WTC11 (cell line): ENCODE measurements at regions of chr21 and their contacts with region 1.

Region 1: DNA sequence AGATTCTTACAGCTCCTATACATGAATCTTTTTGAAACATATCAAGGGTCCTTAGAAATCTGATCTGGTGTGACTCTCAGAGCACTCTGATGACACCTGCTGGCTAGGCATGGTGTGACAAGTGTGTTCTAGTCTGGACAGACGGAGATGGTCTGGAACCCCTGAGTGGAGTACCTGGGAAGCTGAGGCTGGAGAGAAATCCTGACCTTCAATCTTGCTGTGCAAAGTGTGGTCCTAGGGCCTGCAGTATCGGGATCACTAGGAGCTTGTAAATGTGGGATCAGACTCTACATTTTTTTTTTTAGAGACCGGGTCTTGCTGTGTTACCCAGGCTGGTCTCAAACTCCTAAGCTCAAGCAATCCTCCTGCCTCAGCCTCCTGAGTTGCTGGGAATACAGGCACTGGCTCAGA is 78.6 kb upstream of the SOD1 start:
- DNase-seq: peak; percentile 87
- ATAC-seq: peak; percentile 95
- H3K4me3 Mint-ChIP-seq: no peak overlapping the region
- H3K27ac Mint-ChIP-seq: no peak overlapping the region
- H3K4me1 Mint-ChIP-seq: 0 out of 2 replicates have a peak, but pooled peaks cover 8% of the 10 kb centered on the region
- H3K27me3 Mint-ChIP-seq: no peaks in the 10 kb centered on the region
- CTCF ChIP-seq: peak; percentile 75

Region 2: DNA sequence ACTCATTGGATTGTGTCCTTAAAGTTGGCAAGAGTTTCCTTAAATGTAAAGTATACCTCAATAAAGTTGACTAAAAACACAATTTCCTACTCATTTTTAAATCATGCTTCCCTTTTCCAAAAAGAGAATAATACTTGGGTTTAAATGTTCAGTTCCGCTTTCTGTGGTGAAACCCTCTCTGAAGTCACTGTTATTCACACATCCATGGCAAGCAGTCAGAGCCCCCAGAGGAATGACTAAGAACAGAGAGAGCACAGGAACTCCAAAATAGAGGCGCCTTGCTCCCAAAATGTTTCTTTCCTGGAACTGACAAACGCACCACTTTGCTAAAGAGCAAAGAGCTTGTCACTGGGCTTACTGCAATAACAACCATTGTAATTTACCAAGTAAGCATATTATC is 379.3 kb before region 1 on chr21:
- CTCF ChIA-PET with region 1: interaction called, 15 read pairs
- POLR2A ChIA-PET with region 1: no interaction called
- DNase-seq: no peak
- ATAC-seq: no peak
- H3K4me3 Mint-ChIP-seq: no peak overlapping the region
- H3K27ac Mint-ChIP-seq: no peak overlapping the region
- H3K4me1 Mint-ChIP-seq: peaks cover 3% of the 10 kb centered on the region
- H3K27me3 Mint-ChIP-seq: no peaks in the 10 kb centered on the region
- CTCF ChIP-seq: no peak

Region 3: GRCh38 chr21:31473685-31474345 is 107.1 kb before region 1 on chr21:
- CTCF ChIA-PET with region 1: interaction called, 12 read pairs
- POLR2A ChIA-PET with region 1: no interaction called
- DNase-seq: no peak
- ATAC-seq: no peak
- H3K4me3 Mint-ChIP-seq: no peak overlapping the region
- H3K27ac Mint-ChIP-seq: peak overlapping the region; percentile 66; the same call in 1 of the 2 replicates
- H3K4me1 Mint-ChIP-seq: peaks cover 34% of the 10 kb centered on the region
- H3K27me3 Mint-ChIP-seq: no peaks in the 10 kb centered on the region
- CTCF ChIP-seq: no peak

Region 4: DNA sequence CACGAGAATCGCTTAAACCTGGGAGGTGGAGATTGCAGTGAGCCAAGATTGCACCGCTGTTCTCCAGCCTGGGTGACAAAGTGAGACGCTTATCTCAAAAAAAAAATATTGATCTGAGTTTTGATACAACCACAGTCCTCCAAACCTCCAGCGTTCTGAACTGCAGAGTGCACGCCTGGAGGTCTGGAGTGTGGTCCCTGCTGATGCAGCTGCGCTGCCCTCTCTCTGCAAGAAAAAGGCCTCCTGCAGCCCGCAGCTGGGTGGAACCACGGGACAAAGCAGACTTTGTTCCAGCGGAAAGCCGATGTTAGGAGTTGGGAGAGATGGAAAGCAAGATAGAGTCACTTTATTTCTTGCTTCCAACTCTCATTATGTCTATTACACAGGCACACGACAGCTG is 66.3 kb before region 1 on chr21:
- CTCF ChIA-PET with region 1: interaction called, 15 read pairs
- POLR2A ChIA-PET with region 1: no interaction called
- DNase-seq: peak; percentile 50
- ATAC-seq: peak; percentile 83
- H3K4me3 Mint-ChIP-seq: peak overlapping the region; percentile 29; the same call in 1 of the 2 replicates
- H3K27ac Mint-ChIP-seq: 0 out of 2 replicates have a peak overlapping the region, but pooled peaks have one; percentile 27
- H3K4me1 Mint-ChIP-seq: peaks cover 30% of the 10 kb centered on the region
- H3K27me3 Mint-ChIP-seq: no peaks in the 10 kb centered on the region
- CTCF ChIP-seq: no peak

Region 5: DNA sequence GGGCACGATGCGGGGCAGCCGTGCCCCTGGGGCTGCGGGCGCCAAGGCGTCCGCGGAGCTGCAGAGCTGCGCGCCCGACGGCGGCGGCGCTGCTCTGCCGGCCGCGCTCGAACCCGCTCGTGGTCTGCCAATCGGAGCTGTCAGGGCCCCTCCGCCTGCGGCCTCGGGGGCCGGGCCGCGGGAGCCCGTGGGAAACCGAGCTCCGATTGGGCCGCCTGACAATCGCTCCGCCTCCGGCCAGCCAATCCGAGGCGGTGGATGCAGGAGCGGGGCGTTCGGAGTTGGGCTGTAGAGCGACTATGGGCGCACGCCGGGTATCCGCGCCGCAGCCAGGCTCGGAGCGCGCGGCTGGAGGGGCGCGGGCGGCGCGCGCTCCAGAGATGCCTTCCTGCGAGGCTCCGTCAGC is 21.9 kb before region 1 on chr21:
- CTCF ChIA-PET with region 1: interaction called, 46 read pairs
- POLR2A ChIA-PET with region 1: interaction called, 9 read pairs
- DNase-seq: peak; percentile 96
- ATAC-seq: peak; percentile 76
- H3K4me3 Mint-ChIP-seq: peak overlapping the region; percentile 92
- H3K27ac Mint-ChIP-seq: no peak overlapping the region
- H3K4me1 Mint-ChIP-seq: peaks cover 54% of the 10 kb centered on the region
- H3K27me3 Mint-ChIP-seq: peaks cover 21% of the 10 kb centered on the region
- CTCF ChIP-seq: no peak

Region 6: DNA sequence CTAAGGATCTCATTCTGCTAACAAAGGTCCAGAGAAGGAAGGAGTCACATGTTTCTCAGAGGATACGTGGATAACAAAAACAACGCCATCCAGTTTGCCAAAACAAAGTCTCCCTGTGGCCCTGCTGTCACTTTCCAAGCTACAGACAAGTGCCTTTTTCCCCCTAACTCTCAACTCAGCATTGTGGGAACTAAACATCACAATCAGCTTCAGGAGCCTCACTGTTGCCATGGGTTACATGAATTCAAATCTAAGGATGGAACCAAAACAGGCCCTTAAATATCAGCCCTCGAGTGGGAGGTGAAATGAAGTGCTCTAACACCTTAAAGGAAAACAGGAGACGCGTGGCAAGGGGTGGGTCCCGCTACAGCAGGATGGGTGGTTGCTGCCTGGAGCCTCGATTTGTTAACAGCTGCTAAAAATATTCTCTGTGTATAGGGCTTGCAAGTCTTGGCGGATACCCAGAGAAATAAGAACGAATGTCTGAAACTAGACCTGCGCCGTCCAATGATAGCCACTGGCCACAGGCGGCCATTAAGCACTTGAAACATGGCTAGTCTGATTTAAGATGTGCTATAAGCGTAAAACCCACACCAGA is 12.2 kb after region 1 on chr21:
- CTCF ChIA-PET with region 1: interaction called, 11 read pairs
- POLR2A ChIA-PET with region 1: no interaction called
- DNase-seq: no peak
- ATAC-seq: no peak
- H3K4me3 Mint-ChIP-seq: no peak overlapping the region
- H3K27ac Mint-ChIP-seq: no peak overlapping the region
- H3K4me1 Mint-ChIP-seq: 0 out of 2 replicates have a peak, but pooled peaks cover 3% of the 10 kb centered on the region
- H3K27me3 Mint-ChIP-seq: no peaks in the 10 kb centered on the region
- CTCF ChIP-seq: no peak

Region 7: GRCh38 chr21:31756787-31757186 is 175.9 kb after region 1 on chr21:
- CTCF ChIA-PET with region 1: no interaction called
- POLR2A ChIA-PET with region 1: no interaction called
- DNase-seq: no peak
- ATAC-seq: no peak
- H3K4me3 Mint-ChIP-seq: no peak overlapping the region
- H3K27ac Mint-ChIP-seq: no peak overlapping the region
- H3K4me1 Mint-ChIP-seq: peaks cover 17% of the 10 kb centered on the region
- H3K27me3 Mint-ChIP-seq: no peaks in the 10 kb centered on the region
- CTCF ChIP-seq: no peak